Activated CD8-positive, alpha-beta T cell treated with anti-CD3 and anti-CD28 coated beads for 36 hours (primary cell): ENCODE measurements at regions of chr2 and their contacts with region 1.

Region 1: GRCh38 chr2:206800506-206801417 is 35.4 kb downstream of the FASTKD2 start:
- DNase-seq: peak; percentile 52
- ATAC-seq: peak; percentile 50
- H3K4me3 Mint-ChIP-seq: peak overlapping the region; percentile 28
- H3K27ac Mint-ChIP-seq: peak overlapping the region; percentile 65
- H3K4me1 Mint-ChIP-seq: peaks cover 26% of the 10 kb centered on the region
- H3K27me3 Mint-ChIP-seq: no peaks in the 10 kb centered on the region
- CTCF ChIP-seq: peak; percentile 65

Region 2: DNA sequence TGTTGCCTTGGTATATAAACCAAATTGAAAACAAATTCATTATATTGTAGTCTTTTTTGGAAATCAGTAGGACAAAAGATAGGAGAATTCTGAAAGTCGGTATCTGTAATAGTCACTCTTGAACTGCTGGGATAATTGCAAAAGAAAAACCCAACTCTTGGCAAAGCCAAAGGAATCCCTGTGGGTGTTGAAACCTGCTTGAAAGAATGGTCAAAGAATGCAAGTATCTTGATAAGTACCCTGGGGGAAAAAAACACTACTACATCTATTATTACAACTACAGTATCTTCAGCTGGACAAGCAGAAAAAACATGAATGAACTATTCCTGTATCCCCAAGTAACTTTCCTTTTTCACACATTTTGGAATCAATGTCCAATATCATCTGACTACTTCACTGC is 165.7 kb before region 1 on chr2:
- CTCF ChIA-PET with region 1: no interaction called
- POLR2A ChIA-PET with region 1: no interaction called
- intact Hi-C with region 1: no loop called
- DNase-seq: no peak
- ATAC-seq: no peak
- H3K4me3 Mint-ChIP-seq: no peak overlapping the region
- H3K27ac Mint-ChIP-seq: no peak overlapping the region
- H3K4me1 Mint-ChIP-seq: no peaks in the 10 kb centered on the region
- H3K27me3 Mint-ChIP-seq: peaks cover 1% of the 10 kb centered on the region
- CTCF ChIP-seq: no peak

Region 3: DNA sequence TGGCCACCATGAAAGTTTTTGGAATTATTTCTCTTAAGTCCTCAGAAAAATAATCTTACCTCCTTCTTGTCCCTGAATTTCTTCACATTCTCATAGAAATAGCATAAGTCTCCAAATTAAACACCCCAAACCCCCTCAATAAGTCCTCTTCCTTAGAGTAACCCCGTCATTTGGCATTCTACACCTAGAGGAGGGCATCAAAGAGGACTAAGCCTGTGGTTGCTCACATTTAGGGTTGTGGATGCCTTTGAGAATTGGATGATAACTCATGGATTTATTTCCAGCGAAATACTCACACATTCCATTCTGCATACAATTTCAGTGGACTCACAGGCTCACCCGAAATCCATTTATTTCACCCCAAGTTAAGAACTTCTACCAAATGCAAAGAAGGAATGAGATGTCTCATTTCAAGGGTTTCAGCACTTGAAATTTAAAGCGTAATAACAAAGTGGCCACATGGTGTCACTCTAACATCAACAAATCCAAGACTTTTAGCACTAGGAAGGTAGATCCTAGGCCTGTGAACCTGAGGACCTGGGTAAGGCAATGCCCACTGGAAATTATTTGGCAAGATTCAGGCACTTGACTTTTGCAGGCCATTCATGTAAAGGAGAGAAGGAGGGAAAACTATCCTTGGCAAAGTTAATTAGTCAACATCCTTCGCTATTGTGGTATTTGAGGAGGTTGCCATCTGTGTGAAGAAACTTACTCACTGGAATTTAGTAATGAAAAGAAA is 107.2 kb before region 1 on chr2:
- CTCF ChIA-PET with region 1: interaction called, 10 read pairs
- POLR2A ChIA-PET with region 1: no interaction called
- intact Hi-C with region 1: no loop called
- DNase-seq: peak; percentile 33
- ATAC-seq: peak; percentile 49
- H3K4me3 Mint-ChIP-seq: no peak overlapping the region
- H3K27ac Mint-ChIP-seq: no peak overlapping the region
- H3K4me1 Mint-ChIP-seq: peaks cover 3% of the 10 kb centered on the region
- H3K27me3 Mint-ChIP-seq: no peaks in the 10 kb centered on the region
- CTCF ChIP-seq: peak; percentile 76

Region 4: DNA sequence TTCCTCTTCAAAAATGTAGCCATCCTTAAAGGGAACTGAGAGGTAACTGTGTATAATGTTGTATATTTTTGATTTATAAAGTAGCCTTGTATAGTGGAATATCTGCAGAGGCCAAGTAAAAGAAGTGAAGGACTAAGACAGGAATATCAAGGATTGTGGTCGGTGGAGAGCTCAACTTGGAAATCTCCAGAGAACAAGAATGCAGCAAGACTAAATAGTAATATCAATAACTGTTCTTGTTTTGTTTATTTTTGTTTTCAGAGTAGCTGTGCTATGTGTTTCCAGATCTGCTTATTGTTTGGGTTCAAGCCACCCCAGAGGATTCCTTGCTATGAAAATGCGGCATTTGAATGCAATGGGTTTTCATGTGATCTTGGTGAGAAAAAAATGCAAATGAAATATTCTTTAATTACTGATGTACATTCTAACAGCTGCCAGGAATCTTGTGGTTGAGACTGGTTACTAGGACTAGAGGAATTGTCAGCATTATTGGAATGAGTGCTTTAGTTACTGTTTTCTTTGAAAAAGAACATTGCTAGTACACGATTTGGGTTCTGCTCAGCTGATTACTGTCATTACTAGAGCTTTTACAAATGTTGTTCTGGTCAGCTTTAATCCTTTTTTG is 10.3 kb before region 1 on chr2:
- CTCF ChIA-PET with region 1: interaction called, 27 read pairs
- POLR2A ChIA-PET with region 1: no interaction called
- intact Hi-C with region 1: no loop called
- DNase-seq: no peak
- ATAC-seq: no peak
- H3K4me3 Mint-ChIP-seq: no peak overlapping the region
- H3K27ac Mint-ChIP-seq: no peak overlapping the region
- H3K4me1 Mint-ChIP-seq: peaks cover 2% of the 10 kb centered on the region
- H3K27me3 Mint-ChIP-seq: no peaks in the 10 kb centered on the region
- CTCF ChIP-seq: no peak

Region 5: DNA sequence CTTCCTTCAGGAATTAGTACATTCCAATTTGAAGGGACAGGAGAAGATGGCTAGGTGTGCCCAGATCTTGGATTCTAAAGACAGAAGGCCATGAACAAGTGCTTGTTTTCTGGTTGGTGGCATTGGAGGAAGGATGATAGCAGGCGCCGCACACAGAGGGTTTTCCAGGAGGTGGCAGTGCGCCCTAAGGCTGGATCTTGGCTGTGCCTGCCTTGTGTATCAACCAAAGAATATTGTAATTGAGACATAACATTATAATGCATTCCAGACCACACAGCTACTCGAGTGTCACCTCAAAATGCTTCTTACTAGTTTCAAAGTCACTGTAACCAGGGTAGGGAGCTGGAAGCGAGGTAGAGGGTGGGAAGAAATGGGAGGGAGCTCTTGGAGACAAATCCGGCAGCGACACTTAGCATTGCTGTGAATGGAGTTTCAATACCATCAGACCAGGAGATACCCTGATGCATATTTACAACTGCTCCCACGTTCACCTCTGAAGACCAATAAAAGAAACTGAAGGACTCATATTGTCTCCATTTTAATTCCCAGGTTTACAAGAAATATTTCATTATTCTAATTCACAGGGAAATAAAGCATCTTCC is 181.1 kb after region 1 on chr2:
- CTCF ChIA-PET with region 1: interaction called, 5 read pairs
- POLR2A ChIA-PET with region 1: no interaction called
- intact Hi-C with region 1: loop called (anchors 10 kb)
- DNase-seq: peak; percentile 68
- ATAC-seq: peak; percentile 60
- H3K4me3 Mint-ChIP-seq: no peak overlapping the region
- H3K27ac Mint-ChIP-seq: no peak overlapping the region
- H3K4me1 Mint-ChIP-seq: peaks cover 7% of the 10 kb centered on the region
- H3K27me3 Mint-ChIP-seq: peaks cover 3% of the 10 kb centered on the region
- CTCF ChIP-seq: peak; percentile 38

Region 6: DNA sequence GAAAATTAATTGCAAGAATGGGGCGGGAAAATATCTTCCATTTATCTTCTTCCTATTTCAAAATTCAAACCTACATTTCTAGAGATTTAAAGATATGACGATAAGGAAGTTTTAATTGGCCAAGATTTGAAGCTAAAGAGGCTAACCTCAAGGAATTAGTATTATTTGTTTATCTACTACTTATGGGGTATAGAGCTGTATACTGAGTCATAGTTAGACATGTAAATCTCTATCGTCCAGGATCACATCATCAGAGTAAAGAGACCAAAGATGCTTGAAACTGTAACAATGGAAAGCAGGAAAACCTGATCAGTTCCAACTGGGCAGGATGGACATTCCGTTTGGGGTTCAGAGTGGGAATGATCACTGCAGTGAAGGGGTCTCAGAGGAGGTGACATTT is 460.2 kb after region 1 on chr2:
- CTCF ChIA-PET with region 1: interaction called, 10 read pairs
- POLR2A ChIA-PET with region 1: no interaction called
- intact Hi-C with region 1: no loop called
- DNase-seq: no peak
- ATAC-seq: no peak
- H3K4me3 Mint-ChIP-seq: no peak overlapping the region
- H3K27ac Mint-ChIP-seq: no peak overlapping the region
- H3K4me1 Mint-ChIP-seq: no peaks in the 10 kb centered on the region
- H3K27me3 Mint-ChIP-seq: no peaks in the 10 kb centered on the region
- CTCF ChIP-seq: no peak

Region 7: GRCh38 chr2:207473049-207473930 is 672.5 kb after region 1 on chr2:
- CTCF ChIA-PET with region 1: interaction called, 44 read pairs
- POLR2A ChIA-PET with region 1: no interaction called
- intact Hi-C with region 1: loop called (anchors 2 kb)
- DNase-seq: peak; percentile 64
- ATAC-seq: peak; percentile 81
- H3K4me3 Mint-ChIP-seq: no peak overlapping the region
- H3K27ac Mint-ChIP-seq: no peak overlapping the region
- H3K4me1 Mint-ChIP-seq: peaks cover 16% of the 10 kb centered on the region
- H3K27me3 Mint-ChIP-seq: no peaks in the 10 kb centered on the region
- CTCF ChIP-seq: peak; percentile 51